ENCODE measurements at regions of chr2 and their contacts with region 1.

Region 1: GRCh38 chr2:27380626-27381545 is at the start of gene ZNF513:
- DNase-seq: peak; percentile 93
- H3K4me3 Mint-ChIP-seq: peak within 1 kb of the TSS; percentile 87
- H3K27ac Mint-ChIP-seq: peak within 1 kb of the TSS; percentile 92
- H3K4me1 Mint-ChIP-seq: peaks cover 37% of the 10 kb centered on the region
- H3K27me3 Mint-ChIP-seq: no peaks in the 10 kb centered on the region
- total RNA-seq, gene ZNF513: 15.6 to 16.7 TPM

Region 2: DNA sequence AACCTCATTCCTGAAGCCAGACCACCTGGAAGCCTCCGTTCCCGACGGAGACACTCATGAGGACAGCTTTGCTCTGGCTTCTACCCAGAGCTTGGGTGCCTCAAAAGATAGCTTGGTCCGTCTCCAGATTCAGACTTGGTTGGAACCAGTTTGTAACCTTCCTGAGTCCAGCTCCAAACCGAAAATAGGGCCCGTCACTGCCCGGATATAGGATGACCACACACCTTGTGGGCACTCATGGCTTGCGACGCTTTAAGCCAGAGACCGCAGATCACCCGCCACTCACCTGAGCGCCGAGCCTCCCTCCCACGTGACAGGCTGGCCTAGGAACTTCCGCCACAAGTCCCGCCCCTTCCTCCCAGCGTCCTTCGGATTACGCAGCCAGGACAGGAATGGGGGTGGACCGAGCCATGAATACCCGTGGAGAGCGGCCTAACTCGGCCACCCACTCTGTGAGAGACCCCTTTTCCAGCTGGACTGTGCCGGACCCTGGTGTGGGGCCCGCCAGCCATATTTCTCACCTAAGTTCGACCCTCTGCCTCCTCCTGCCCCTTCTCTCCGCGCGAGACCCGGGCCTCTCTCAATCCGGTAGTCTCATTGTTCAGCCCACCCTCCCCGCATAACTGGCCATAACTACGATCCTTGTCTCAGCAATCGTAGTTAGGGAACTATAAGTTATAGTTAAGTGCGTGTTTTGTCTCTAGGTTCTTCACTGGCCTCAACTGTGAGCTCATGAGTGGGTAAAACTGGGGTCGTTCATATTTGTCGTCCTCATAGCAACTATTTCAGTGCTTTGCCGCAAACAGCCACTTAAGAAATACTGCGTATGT is 57.9 kb before region 1 on chr2 and contains the start of gene MPV17:
- CTCF ChIA-PET with region 1: interaction called, 3 read pairs
- POLR2A ChIA-PET with region 1: interaction called, 17 read pairs
- DNase-seq: peak; percentile 91
- H3K4me3 Mint-ChIP-seq: peak within 1 kb of the TSS; percentile 97
- H3K27ac Mint-ChIP-seq: peak within 1 kb of the TSS; percentile 79
- H3K4me1 Mint-ChIP-seq: peaks cover 22% of the 10 kb centered on the region
- H3K27me3 Mint-ChIP-seq: no peaks in the 10 kb centered on the region
- total RNA-seq, gene MPV17: 83.3 to 83.9 TPM

Region 3: DNA sequence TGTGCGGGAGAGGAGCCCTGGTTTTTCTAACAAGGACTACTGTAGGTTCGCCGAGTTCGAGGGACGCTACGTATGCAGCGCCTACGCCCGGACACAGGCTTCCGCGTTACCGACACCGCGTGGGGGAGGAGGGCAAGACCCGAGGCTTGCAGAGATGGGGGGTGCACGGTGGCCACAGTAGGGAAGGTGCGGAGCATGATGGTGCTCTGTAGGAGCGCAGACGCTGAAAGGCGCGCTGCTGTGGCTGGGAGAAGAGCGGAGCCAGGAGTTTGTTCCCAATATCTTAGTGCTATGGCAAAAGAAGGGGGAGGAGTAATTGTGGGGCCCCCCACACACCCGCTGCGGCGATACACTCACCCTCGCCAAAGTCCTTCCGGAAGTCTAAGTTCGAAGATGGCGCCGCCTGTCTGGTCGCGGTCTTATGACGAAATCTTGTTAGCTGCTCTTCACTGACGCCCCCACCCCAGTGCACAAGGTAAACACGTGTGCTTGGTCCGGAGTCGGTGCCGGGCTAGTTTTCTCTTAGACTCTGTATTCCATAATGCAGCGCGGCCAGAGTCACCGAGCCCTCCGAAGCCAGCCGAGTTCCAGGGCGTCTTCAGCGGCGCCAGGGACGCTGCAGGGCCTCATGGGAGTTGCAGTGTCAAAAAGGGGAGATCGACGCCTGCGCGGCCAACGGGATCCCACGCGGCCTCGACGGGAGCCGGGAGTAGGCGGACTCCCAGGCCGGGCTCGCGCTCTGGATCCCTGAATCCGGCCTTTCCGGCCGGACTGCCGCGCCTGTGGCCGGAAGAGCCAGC is 24.3 kb before region 1 on chr2 and contains the start of gene GTF3C2:
- CTCF ChIA-PET with region 1: interaction called, 6 read pairs
- POLR2A ChIA-PET with region 1: interaction called, 14 read pairs
- DNase-seq: peak; percentile 93
- H3K4me3 Mint-ChIP-seq: peak within 1 kb of the TSS; percentile 95
- H3K27ac Mint-ChIP-seq: peak within 1 kb of the TSS; percentile 97
- H3K4me1 Mint-ChIP-seq: peaks cover 50% of the 10 kb centered on the region
- H3K27me3 Mint-ChIP-seq: no peaks in the 10 kb centered on the region
- total RNA-seq, gene GTF3C2: 49.0 to 49.1 TPM

Region 4: GRCh38 chr2:27370026-27370815 is 10.7 kb before region 1 on chr2 and contains the starts of genes EIF2B4 and SNX17:
- CTCF ChIA-PET with region 1: interaction called, 13 read pairs
- POLR2A ChIA-PET with region 1: interaction called, 96 read pairs
- DNase-seq: peak; percentile 100
- H3K4me3 Mint-ChIP-seq: peak within 1 kb of the TSS; percentile 88
- H3K27ac Mint-ChIP-seq: peak within 1 kb of the TSS; percentile 93
- H3K4me1 Mint-ChIP-seq: peaks cover 45% of the 10 kb centered on the region
- H3K27me3 Mint-ChIP-seq: no peaks in the 10 kb centered on the region
- total RNA-seq, gene EIF2B4: 34.1 to 36.9 TPM
- total RNA-seq, gene SNX17: 116 to 123 TPM

Region 5: DNA sequence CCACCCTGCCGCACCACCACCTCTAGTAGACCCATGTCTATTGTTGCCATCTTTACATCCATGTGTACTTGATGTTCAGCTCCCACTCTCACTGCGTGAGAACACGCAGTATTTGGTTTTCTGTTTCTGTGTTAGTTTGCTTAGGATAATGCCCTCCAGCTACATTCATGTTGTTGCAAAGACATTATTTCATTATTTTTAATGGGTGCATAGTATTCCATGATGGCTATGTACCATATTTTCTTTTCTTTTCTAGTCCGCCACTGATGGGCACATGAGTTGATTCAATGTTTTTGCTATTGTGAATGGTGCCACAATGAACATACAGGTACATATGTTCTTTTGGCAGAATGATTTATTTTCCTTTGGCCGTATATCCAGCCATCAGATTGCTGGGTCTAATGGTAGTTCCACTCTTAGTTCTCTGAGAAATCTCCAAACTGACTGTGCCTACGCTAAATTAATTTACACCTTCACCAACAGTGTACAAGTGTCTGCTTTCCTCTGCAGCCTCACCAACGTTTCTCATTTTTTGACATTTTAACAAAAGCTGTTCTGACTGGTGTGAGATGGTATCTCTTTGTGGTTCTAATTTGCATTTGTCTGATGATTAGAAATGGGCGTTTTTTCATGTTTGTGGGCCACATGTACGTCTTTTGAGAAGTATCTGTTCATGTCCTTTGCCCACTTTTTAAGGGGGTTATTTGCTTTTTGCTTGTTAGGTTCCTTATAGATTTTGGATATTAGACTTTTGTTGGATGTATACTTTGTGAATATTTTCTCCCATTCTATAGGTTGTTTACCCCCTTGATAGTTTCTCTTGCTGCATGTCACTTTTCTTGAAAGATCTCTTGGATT is 10.2 kb after region 1 on chr2:
- CTCF ChIA-PET with region 1: interaction called, 5 read pairs
- POLR2A ChIA-PET with region 1: interaction called, 17 read pairs
- DNase-seq: no peak
- H3K4me3 Mint-ChIP-seq: peak overlapping the region; percentile 38
- H3K27ac Mint-ChIP-seq: peak overlapping the region; percentile 90
- H3K4me1 Mint-ChIP-seq: peaks cover 41% of the 10 kb centered on the region
- H3K27me3 Mint-ChIP-seq: no peaks in the 10 kb centered on the region

Region 6: GRCh38 chr2:27409321-27410073 is 28.6 kb after region 1 on chr2 and contains the start of gene PPM1G:
- CTCF ChIA-PET with region 1: no interaction called
- POLR2A ChIA-PET with region 1: interaction called, 24 read pairs
- DNase-seq: peak; percentile 97
- H3K4me3 Mint-ChIP-seq: peak within 1 kb of the TSS; percentile 82
- H3K27ac Mint-ChIP-seq: peak within 1 kb of the TSS; percentile 74
- H3K4me1 Mint-ChIP-seq: peaks cover 45% of the 10 kb centered on the region
- H3K27me3 Mint-ChIP-seq: peaks cover 4% of the 10 kb centered on the region
- total RNA-seq, gene PPM1G: 119 to 122 TPM